B cell (primary cell): ENCODE measurements at regions of chr7 and their contacts with region 1.

Region 1: GRCh38 chr7:149239345-149240191 is at the start of gene ZNF212:
- DNase-seq: peak; percentile 91
- ATAC-seq: peak; percentile 100
- H3K4me3 ChIP-seq: peak within 1 kb of the TSS; percentile 75 to 94 (median 84)
- H3K4me3 Mint-ChIP-seq: peak within 1 kb of the TSS; percentile 95
- H3K27ac ChIP-seq: peak within 1 kb of the TSS; percentile 33 to 73
- H3K27ac Mint-ChIP-seq: peak within 1 kb of the TSS; percentile 93
- H3K4me1 ChIP-seq: peaks cover 17 to 25% of the 10 kb centered on the region in 2 donors
- H3K4me1 Mint-ChIP-seq: peaks cover 28% of the 10 kb centered on the region
- H3K27me3 ChIP-seq: peaks cover 0 to 5% (median 0%) of the 10 kb centered on the region in 4 experiments
- H3K27me3 Mint-ChIP-seq: peaks cover 3% of the 10 kb centered on the region
- CTCF ChIP-seq: peak; percentile 84
- total RNA-seq, gene ZNF212: 22.5 and 25.7 TPM in 2 replicates

Region 2: GRCh38 chr7:149125863-149126661 is 113.5 kb before region 1 on chr7 and contains the start of gene ZNF425:
- CTCF ChIA-PET with region 1: no interaction called
- POLR2A ChIA-PET with region 1: no interaction called
- intact Hi-C with region 1: loop called (anchors 2 kb)
- DNase-seq: peak; percentile 95
- ATAC-seq: peak; percentile 84
- H3K4me3 ChIP-seq: peak within 1 kb of the TSS; percentile 64 to 98 (median 88)
- H3K4me3 Mint-ChIP-seq: peak within 1 kb of the TSS; percentile 97
- H3K27ac ChIP-seq: peak within 1 kb of the TSS; percentile 85 to 89
- H3K27ac Mint-ChIP-seq: peak within 1 kb of the TSS; percentile 99
- H3K4me1 ChIP-seq: peaks cover 12 to 14% of the 10 kb centered on the region in 2 donors
- H3K4me1 Mint-ChIP-seq: peaks cover 22% of the 10 kb centered on the region
- H3K27me3 ChIP-seq: no peaks in the 10 kb centered on the region
- H3K27me3 Mint-ChIP-seq: no peaks in the 10 kb centered on the region
- CTCF ChIP-seq: peak; percentile 89
- total RNA-seq, gene ZNF425: 2.8 and 3.3 TPM in 2 replicates

Region 3: DNA sequence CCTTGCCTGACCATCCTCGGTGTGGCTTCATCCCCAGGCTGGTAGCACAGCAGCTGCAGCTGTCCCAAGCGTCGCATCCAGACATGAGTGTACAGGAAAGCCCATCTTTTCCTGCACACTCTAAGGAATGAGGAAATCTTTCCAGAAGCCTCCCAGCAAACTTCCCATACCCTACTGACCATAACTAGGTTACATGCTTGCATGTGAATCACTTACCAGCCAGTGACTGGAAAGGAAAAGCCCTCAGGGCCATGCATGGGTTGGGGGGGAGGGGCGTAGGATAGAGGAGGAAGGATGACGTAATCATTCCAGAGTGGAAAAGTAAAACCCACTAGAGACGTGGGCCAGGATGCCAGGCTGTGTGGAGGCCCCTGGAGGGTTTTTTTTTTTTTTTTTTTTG is 19.0 kb before region 1 on chr7:
- CTCF ChIA-PET with region 1: no interaction called
- POLR2A ChIA-PET with region 1: no interaction called
- intact Hi-C with region 1: no loop called
- DNase-seq: no peak
- ATAC-seq: no peak
- H3K4me3 ChIP-seq: no peak overlapping the region
- H3K4me3 Mint-ChIP-seq: no peak overlapping the region
- H3K27ac ChIP-seq: no peak overlapping the region
- H3K27ac Mint-ChIP-seq: no peak overlapping the region
- H3K4me1 ChIP-seq: no peaks in the 10 kb centered on the region
- H3K4me1 Mint-ChIP-seq: no peaks in the 10 kb centered on the region
- H3K27me3 ChIP-seq: no peaks in the 10 kb centered on the region
- H3K27me3 Mint-ChIP-seq: no peaks in the 10 kb centered on the region
- CTCF ChIP-seq: no peak

Region 4: DNA sequence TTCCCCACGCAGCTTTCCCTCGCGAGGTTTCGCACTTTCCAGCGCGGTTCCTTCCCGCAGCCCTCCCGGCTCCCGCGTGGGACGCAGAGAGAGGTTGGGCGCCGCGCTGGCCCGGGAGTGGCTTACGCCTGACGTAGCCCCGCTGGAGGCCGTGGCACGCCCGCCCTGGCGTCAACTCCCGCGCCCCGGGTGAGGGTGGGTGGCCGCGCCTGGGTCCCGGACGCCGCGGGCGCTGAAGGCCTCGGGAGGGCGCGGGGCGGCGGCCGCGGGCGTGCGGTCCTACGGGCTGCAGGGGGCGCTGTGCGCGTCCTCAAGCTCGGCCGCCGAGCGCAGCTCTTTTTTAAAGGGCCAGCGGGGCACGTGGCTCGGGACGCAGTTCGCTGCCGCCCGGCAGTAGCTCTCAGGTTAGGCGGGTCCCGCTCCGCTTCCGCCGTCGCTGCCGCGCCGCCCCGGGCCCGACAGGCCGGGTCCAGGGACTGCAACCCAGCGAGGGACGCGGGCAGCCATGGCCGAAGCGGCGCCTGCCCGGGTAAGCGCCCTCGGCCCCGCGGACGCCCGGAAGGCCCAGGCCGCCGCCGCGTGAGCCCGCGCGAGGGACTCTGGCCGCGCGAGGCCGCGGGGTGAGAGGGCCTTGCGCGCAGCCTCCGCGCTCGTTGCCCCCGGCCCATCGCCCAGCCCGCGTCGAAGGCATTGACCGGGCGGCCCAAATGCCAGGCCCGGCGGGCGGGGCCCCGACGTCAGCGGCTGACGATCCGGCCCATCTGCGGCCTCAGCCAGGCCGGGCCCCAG is 22.5 kb after region 1 on chr7 and contains the start of gene ZNF783:
- CTCF ChIA-PET with region 1: interaction called, 10 read pairs
- POLR2A ChIA-PET with region 1: no interaction called
- intact Hi-C with region 1: loop called (anchors 1 kb)
- DNase-seq: peak; percentile 94
- ATAC-seq: peak; percentile 93
- H3K4me3 ChIP-seq: peak within 1 kb of the TSS in 4 of 5 experiments; percentile 64 to 75 (median 68)
- H3K4me3 Mint-ChIP-seq: peak within 1 kb of the TSS; percentile 94
- H3K27ac ChIP-seq: peak within 1 kb of the TSS; percentile 69 to 76
- H3K27ac Mint-ChIP-seq: peak within 1 kb of the TSS; percentile 92
- H3K4me1 ChIP-seq: peaks cover 13 to 17% of the 10 kb centered on the region in 2 donors
- H3K4me1 Mint-ChIP-seq: peaks cover 21% of the 10 kb centered on the region
- H3K27me3 ChIP-seq: no peaks in the 10 kb centered on the region
- H3K27me3 Mint-ChIP-seq: no peaks in the 10 kb centered on the region
- CTCF ChIP-seq: peak; percentile 86
- total RNA-seq, gene ZNF783: 43.8 and 44.8 TPM in 2 replicates

Region 5: DNA sequence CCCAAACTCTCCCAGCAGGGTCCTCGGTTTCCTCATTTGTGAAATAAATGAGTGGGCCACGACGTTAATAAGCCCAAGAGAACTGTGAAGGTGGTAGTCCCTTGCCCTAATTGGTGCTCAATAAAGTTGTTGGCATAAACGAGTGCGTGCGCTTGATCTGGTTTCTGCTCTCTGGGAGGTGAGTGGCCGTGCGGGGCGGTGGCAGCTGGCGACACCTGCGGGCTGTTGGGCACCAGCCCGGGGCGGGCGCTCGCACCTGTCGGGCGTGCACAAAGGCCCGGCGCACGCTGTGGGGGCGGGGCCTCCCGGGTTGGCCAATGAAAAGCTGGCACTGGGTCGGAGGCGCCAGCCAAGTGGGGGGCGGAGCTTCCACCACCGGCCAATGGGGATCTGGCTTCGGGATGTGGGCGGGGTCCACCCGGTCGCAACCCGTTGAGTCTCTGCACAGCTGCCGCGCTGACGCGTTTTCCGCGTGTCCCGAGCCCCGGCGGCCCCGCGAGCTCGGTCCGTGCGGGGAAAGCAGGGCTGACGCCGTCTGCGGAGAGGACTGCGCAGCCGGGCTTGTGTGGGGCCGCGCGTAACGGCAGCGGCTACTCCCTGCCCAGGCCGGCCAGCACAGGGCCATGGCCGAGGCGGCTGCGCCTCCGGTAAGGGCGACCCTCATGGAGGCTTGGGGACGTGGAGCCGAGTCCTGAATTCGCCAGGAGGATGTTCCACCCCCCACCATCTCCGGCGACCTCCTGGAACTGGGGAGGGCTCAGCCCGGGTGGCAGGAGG is 45.5 kb after region 1 on chr7:
- CTCF ChIA-PET with region 1: interaction called, 5 read pairs
- POLR2A ChIA-PET with region 1: interaction called, 5 read pairs
- intact Hi-C with region 1: loop called (anchors 1 kb)
- DNase-seq: peak; percentile 97
- ATAC-seq: peak; percentile 97
- H3K4me3 ChIP-seq: peak overlapping the region; percentile 31 to 69 (median 60)
- H3K4me3 Mint-ChIP-seq: peak overlapping the region; percentile 93
- H3K27ac ChIP-seq: peak overlapping the region in 1 of 2 donors; percentile 36
- H3K27ac Mint-ChIP-seq: peak overlapping the region; percentile 74
- H3K4me1 ChIP-seq: peaks cover 20 to 27% of the 10 kb centered on the region in 2 donors
- H3K4me1 Mint-ChIP-seq: peaks cover 32% of the 10 kb centered on the region
- H3K27me3 ChIP-seq: no peaks in the 10 kb centered on the region
- H3K27me3 Mint-ChIP-seq: no peaks in the 10 kb centered on the region
- CTCF ChIP-seq: no peak

Region 6: GRCh38 chr7:149353739-149354504 is 114.4 kb after region 1 on chr7:
- CTCF ChIA-PET with region 1: no interaction called
- POLR2A ChIA-PET with region 1: no interaction called
- intact Hi-C with region 1: no loop called
- DNase-seq: no peak
- ATAC-seq: no peak
- H3K4me3 ChIP-seq: no peak overlapping the region
- H3K4me3 Mint-ChIP-seq: no peak overlapping the region
- H3K27ac ChIP-seq: no peak overlapping the region
- H3K27ac Mint-ChIP-seq: no peak overlapping the region
- H3K4me1 ChIP-seq: no peaks in the 10 kb centered on the region
- H3K4me1 Mint-ChIP-seq: no peaks in the 10 kb centered on the region
- H3K27me3 ChIP-seq: no peaks in the 10 kb centered on the region
- H3K27me3 Mint-ChIP-seq: peaks cover 8% of the 10 kb centered on the region
- CTCF ChIP-seq: no peak

Region 7: DNA sequence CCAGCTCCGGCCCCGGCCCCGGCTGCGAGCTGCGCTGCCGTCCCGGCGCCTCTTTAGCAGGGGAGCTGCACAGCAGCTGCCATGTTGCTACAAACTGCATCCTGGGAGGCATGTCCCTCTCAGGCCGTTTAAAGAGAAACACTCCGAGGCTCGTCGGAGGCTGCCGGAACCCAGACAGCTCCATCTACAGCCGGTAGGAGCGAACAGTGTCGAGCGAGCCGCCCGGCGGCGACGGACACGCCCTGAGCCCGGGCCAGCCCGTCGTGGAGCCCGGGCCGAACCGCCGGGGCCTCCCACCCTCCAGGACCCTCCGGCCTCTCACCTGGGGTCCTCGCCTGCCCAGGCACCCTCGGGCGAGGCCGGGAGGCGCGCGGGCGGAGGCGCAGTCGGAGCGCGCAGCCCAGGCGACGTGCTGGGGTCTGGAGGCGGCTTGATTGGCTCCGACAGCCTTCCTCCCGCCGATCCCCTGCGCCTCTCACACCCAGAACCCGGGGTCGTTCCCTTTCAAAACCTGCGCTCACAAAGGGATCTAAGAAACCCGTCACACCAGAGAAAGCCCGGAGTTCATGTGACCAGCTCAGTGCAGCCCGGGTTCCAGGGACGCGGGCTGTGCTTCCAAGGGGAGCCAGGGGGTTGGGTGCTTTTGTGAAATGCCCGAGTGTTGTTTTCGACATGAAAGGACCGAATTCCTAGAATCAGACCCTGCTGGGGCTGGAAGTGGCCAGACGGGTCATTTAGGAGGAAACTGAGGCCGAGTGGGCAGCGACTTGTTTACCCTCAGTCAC is 221.1 kb after region 1 on chr7 and contains the start of gene ZNF777:
- CTCF ChIA-PET with region 1: interaction called, 3 read pairs
- POLR2A ChIA-PET with region 1: no interaction called
- intact Hi-C with region 1: loop called (anchors 1 kb)
- DNase-seq: peak; percentile 87
- ATAC-seq: peak; percentile 97
- H3K4me3 ChIP-seq: peak within 1 kb of the TSS; percentile 25 to 94 (median 70)
- H3K4me3 Mint-ChIP-seq: peak within 1 kb of the TSS; percentile 92
- H3K27ac ChIP-seq: peak within 1 kb of the TSS in 1 of 2 donors; percentile 65
- H3K27ac Mint-ChIP-seq: peak within 1 kb of the TSS; percentile 89
- H3K4me1 ChIP-seq: peaks cover 14% of the 10 kb centered on the region in 2 donors
- H3K4me1 Mint-ChIP-seq: peaks cover 31% of the 10 kb centered on the region
- H3K27me3 ChIP-seq: peaks cover 0 to 11% (median 2%) of the 10 kb centered on the region in 4 experiments
- H3K27me3 Mint-ChIP-seq: peaks cover 14% of the 10 kb centered on the region
- CTCF ChIP-seq: peak; percentile 43
- total RNA-seq, gene ZNF777: 14.9 and 16.0 TPM in 2 replicates

Region 8: DNA sequence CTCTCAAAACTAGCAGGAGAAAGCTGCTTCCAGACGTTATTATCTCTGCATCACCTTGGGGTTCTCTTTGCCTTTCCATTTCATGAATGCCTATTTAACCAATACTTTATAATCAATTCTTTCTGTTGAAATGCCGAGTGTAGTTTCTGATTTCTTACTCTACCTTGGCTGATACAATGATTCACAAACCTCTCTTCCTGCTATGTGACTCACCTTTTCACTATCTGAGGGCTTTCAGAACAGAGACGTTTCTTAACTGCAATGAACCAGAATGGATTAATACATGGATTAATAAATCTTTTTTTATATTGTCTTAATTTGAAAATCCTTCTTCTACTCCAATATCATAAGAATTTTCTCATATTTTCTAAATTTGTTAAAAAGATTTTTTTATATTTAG is 304.5 kb after region 1 on chr7:
- CTCF ChIA-PET with region 1: no interaction called
- POLR2A ChIA-PET with region 1: no interaction called
- intact Hi-C with region 1: no loop called
- DNase-seq: no peak
- ATAC-seq: no peak
- H3K4me3 ChIP-seq: no peak overlapping the region
- H3K4me3 Mint-ChIP-seq: no peak overlapping the region
- H3K27ac ChIP-seq: no peak overlapping the region
- H3K27ac Mint-ChIP-seq: no peak overlapping the region
- H3K4me1 ChIP-seq: no peaks in the 10 kb centered on the region
- H3K4me1 Mint-ChIP-seq: peaks cover 2% of the 10 kb centered on the region
- H3K27me3 ChIP-seq: no peaks in the 10 kb centered on the region
- H3K27me3 Mint-ChIP-seq: no peaks in the 10 kb centered on the region
- CTCF ChIP-seq: no peak